ENCODE measurements at regions of chr2 and their contacts with region 1.

Region 1: GRCh38 chr2:111143107-111143842 is 22.6 kb downstream of the BCL2L11 start:
- DNase-seq: no peak
- H3K4me3 Mint-ChIP-seq: no peak overlapping the region
- H3K27ac Mint-ChIP-seq: no peak overlapping the region
- H3K4me1 Mint-ChIP-seq: peaks cover 44% of the 10 kb centered on the region
- H3K27me3 Mint-ChIP-seq: no peaks in the 10 kb centered on the region

Region 2: DNA sequence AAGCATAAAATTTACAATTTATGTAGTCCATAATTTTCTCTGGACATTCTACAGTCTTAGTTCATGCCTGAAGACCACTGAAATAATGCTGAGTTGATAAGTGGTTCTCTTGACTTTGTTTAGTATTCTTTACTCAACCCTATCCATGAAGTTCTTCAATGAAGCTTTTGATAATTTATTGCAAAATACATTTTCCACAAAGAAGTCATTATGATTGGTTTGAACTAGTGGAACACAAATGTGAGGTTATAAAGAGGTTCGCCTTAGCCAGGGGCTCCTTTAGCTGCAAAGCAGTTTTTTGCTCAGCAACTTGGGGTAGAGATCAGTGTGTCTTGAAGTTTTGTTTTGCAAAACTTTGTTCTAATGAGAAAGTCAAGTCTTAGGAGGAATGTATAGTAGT is 16.7 kb before region 1 on chr2:
- intact Hi-C with region 1: loop called (anchors 2 kb)
- DNase-seq: peak; percentile 44
- H3K4me3 Mint-ChIP-seq: peak overlapping the region; percentile 96
- H3K27ac Mint-ChIP-seq: no peak overlapping the region
- H3K4me1 Mint-ChIP-seq: peaks cover 55% of the 10 kb centered on the region
- H3K27me3 Mint-ChIP-seq: peaks cover 2% of the 10 kb centered on the region

Region 3: DNA sequence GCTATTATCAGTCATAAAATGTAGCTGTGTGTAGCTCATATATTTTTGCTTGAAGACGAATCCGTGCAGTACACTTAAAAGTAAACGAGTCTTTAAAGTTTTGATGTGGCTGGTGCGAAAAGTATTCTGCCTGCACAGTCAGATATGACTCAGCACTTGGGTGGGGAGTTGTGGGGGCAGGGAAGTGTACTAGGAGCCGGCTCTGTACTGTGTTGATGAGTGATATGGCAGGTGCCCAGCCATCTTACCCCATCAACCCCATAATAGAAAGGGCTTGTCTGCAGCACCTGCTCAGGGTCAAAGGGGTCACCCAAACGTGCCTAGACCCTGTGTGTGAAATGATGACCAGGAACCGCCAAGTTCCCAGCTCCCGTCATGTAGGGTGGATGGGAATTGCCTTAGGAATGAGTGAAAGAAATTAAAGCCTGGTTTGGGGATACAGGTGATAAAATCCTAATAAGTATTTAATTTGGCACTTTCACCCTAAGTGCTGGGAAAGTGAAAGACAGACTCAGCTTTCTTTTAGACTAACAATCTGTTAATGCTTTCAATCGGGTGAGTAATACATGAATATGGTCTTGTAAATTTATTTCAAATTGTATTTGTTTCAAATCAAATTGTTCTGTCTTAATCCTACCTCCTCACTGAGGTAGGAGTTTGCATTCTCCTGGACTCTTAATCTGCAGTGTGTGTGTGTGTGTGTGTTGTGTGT is 25.4 kb after region 1 on chr2:
- intact Hi-C with region 1: no loop called
- DNase-seq: peak; percentile 87
- H3K4me3 Mint-ChIP-seq: peak overlapping the region; percentile 4
- H3K27ac Mint-ChIP-seq: peak overlapping the region; percentile 70
- H3K4me1 Mint-ChIP-seq: peaks cover 36% of the 10 kb centered on the region
- H3K27me3 Mint-ChIP-seq: peaks cover 17% of the 10 kb centered on the region